Vagina (tissue), 2 donors: ENCODE measurements at regions of chr1 and their contacts with region 1.

Region 1: DNA sequence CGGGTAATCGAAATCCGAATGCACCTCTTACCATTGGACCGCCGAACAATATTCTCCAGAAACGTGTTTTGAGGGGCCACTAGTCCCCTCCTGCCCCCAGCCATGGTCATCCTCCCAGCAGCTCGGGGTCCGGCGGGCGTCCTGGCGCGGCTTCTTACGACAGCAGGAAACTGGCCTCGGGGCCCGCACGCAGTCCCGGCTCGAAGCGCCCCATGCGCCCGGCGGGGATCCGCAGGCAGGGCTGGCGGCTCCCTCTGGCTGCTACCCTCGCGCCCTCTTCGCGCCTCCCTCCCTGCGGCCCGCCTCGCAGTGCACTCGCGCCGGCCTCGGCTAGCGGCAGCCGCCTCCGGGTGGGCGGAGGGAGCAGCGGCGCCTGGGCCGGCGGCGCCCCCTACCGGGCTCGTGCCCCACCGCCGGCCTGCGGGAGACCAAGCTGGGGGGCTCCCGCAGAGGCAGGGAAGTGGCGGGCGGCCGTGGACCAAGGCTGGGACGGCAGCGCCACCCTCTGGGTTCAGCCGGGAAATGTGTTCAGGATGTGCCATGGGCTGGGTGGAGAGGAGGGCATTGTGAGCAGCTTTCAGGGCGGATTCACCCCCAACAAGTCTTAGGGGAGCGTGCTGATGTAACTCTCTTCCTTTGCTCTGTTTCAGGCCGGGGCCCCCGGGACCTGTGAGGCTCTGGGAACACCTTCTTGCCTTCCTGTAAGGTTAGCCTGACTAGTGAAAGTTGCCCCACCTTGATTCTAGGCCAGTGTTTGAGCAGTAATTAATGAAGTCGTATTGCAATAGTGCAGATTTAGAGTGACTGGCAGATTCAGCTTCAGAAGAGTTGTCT is at the start of gene KCNH1:
- DNase-seq: no peak
- H3K4me3 ChIP-seq: peak within 1 kb of the TSS; percentile 43 to 50
- H3K27ac ChIP-seq: peak within 1 kb of the TSS; percentile 76
- H3K4me1 ChIP-seq: peaks cover 20% of the 10 kb centered on the region
- H3K27me3 ChIP-seq: peaks cover 4% of the 10 kb centered on the region
- CTCF ChIP-seq: peak; percentile 70 to 95 (median 88)
- POLR2A ChIP-seq: peak in 1 of 2 donors; percentile 14
- total RNA-seq, gene KCNH1: 3.9 TPM

Region 2: GRCh38 chr1:210584439-210585113 is 549.5 kb before region 1 on chr1:
- intact Hi-C with region 1: loop called (anchors 1 kb)
- DNase-seq: no peak
- H3K4me3 ChIP-seq: no peak overlapping the region
- H3K27ac ChIP-seq: no peak overlapping the region
- H3K4me1 ChIP-seq: no peaks in the 10 kb centered on the region
- H3K27me3 ChIP-seq: no peaks in the 10 kb centered on the region
- CTCF ChIP-seq: peak; percentile 34 to 52 (median 44)
- POLR2A ChIP-seq: no peak

Region 3: DNA sequence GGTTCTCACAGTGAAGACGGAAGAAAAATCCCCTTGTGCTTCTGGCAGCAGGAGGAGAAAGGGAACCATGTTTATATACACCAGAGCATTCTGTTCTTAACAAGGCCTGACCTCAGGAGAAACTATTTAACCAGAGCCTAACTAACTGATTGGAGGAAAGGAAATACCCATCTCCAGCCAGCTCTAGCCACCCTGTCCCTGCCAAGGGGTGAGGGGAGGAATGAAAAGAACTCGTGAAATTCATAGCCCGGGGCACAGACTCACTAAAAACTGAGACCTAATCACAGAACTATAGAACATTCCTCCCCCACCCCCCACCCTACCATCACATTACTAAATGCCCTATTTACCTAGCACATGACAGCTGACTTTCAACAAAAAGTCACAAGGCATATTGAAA is 65.1 kb before region 1 on chr1:
- intact Hi-C with region 1: no loop called
- DNase-seq: no peak
- H3K4me3 ChIP-seq: no peak overlapping the region
- H3K27ac ChIP-seq: no peak overlapping the region
- H3K4me1 ChIP-seq: no peaks in the 10 kb centered on the region
- H3K27me3 ChIP-seq: no peaks in the 10 kb centered on the region
- CTCF ChIP-seq: no peak
- POLR2A ChIP-seq: no peak